CD14-positive monocyte (primary cell): ENCODE measurements at regions of chr3 and their contacts with region 1.

Region 1: DNA sequence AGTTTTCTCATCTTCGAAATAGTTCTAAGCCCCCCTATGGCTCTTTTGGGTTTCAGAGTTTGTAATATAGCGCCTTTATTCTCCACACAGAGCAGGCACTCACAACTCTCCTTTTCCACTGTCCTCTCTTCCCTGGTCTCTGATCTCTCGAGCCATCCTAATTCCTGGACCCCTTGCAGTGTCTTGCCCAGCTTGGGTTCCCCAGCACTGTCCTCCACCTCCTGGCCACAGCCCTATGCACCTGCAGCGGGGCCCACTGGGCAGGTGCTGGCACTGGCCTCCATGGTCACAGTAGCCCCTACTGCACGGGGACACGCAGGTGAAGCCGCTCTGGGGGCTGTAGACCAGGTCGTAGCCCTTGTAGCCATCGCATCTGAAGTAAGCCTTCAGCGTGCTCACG is 27.9 kb downstream of the MUC20 start:
- DNase-seq: no peak
- H3K4me3 ChIP-seq: no peak overlapping the region
- H3K4me3 Mint-ChIP-seq: peak overlapping the region in 1 of 2 donors; percentile 50
- H3K27ac ChIP-seq: no peak overlapping the region
- H3K27ac Mint-ChIP-seq: no peak overlapping the region
- H3K4me1 ChIP-seq: peaks cover 0 to 5% of the 10 kb centered on the region in 2 donors
- H3K4me1 Mint-ChIP-seq: peaks cover 5% of the 10 kb centered on the region
- H3K27me3 ChIP-seq: no peaks in the 10 kb centered on the region
- H3K27me3 Mint-ChIP-seq: peaks cover 7 to 19% (median 16%) of the 10 kb centered on the region in 3 donors
- CTCF ChIP-seq: no peak

Region 2: GRCh38 chr3:195616712-195617086 is 132.0 kb before region 1 on chr3:
- intact Hi-C with region 1: loop called (anchors 5 to 10 kb)
- DNase-seq: no peak
- H3K4me3 ChIP-seq: no peak overlapping the region
- H3K4me3 Mint-ChIP-seq: no peak overlapping the region
- H3K27ac ChIP-seq: no peak overlapping the region
- H3K27ac Mint-ChIP-seq: no peak overlapping the region
- H3K4me1 ChIP-seq: no peaks in the 10 kb centered on the region
- H3K4me1 Mint-ChIP-seq: peaks cover 1% of the 10 kb centered on the region
- H3K27me3 ChIP-seq: no peaks in the 10 kb centered on the region
- H3K27me3 Mint-ChIP-seq: peaks cover 5 to 11% (median 7%) of the 10 kb centered on the region in 3 donors
- CTCF ChIP-seq: no peak

Region 3: DNA sequence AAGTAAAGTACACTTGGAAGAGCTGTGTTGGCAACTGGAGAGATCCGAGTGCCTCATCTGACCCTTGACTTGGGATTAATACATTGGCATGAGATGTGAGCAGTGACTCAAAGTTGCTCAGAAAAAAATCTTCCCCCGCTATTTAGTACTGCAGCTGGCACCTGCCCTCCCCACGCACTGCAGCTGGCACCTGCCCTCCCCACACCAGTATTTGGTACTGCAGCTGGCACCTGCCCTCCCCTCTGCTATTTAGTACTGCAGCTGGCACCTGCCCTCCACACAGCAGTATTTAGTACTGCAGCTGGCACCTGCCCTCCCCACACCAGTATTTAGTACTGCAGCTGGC is 31.8 kb before region 1 on chr3:
- intact Hi-C with region 1: no loop called
- DNase-seq: no peak
- H3K4me3 ChIP-seq: no peak overlapping the region
- H3K4me3 Mint-ChIP-seq: no peak overlapping the region
- H3K27ac ChIP-seq: no peak overlapping the region
- H3K27ac Mint-ChIP-seq: peak overlapping the region in 1 of 7 donors; percentile 10
- H3K4me1 ChIP-seq: no peaks in the 10 kb centered on the region
- H3K4me1 Mint-ChIP-seq: peaks cover 4% of the 10 kb centered on the region
- H3K27me3 ChIP-seq: no peaks in the 10 kb centered on the region
- H3K27me3 Mint-ChIP-seq: peaks cover 9 to 15% (median 11%) of the 10 kb centered on the region in 3 donors
- CTCF ChIP-seq: no peak

Region 4: GRCh38 chr3:195729476-195730251 is 19.0 kb before region 1 on chr3:
- intact Hi-C with region 1: loop called (anchors 1 kb)
- DNase-seq: no peak
- H3K4me3 ChIP-seq: no peak overlapping the region
- H3K4me3 Mint-ChIP-seq: no peak overlapping the region
- H3K27ac ChIP-seq: no peak overlapping the region
- H3K27ac Mint-ChIP-seq: no peak overlapping the region
- H3K4me1 ChIP-seq: no peaks in the 10 kb centered on the region
- H3K4me1 Mint-ChIP-seq: no peaks in the 10 kb centered on the region
- H3K27me3 ChIP-seq: no peaks in the 10 kb centered on the region
- H3K27me3 Mint-ChIP-seq: peaks cover 2 to 10% (median 5%) of the 10 kb centered on the region in 3 donors
- CTCF ChIP-seq: no peak

Region 5: DNA sequence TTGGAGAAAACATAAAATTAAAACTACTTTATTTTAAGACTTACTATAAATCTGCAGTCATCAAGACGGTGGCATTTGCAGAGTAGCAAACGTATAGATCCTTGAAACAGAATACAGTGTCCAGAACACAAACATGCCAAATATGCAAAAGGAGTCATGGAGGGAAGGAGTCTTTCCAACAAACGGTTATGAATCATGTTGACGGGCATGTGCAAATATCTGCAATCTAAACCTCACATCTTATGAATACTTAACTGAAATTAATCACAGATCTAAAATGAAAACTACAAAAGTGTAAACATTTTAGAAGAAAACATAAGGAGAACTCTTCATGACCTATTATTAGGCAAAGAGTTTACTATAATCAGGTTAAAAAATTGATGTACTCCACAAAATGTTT is 263.8 kb after region 1 on chr3:
- intact Hi-C with region 1: no loop called
- DNase-seq: no peak
- H3K4me3 ChIP-seq: no peak overlapping the region
- H3K4me3 Mint-ChIP-seq: no peak overlapping the region
- H3K27ac ChIP-seq: no peak overlapping the region
- H3K27ac Mint-ChIP-seq: no peak overlapping the region
- H3K4me1 ChIP-seq: no peaks in the 10 kb centered on the region
- H3K4me1 Mint-ChIP-seq: no peaks in the 10 kb centered on the region
- H3K27me3 ChIP-seq: no peaks in the 10 kb centered on the region
- H3K27me3 Mint-ChIP-seq: peaks cover 2 to 11% (median 3%) of the 10 kb centered on the region in 3 donors
- CTCF ChIP-seq: no peak